Sigmoid colon (tissue), 7 donors: ENCODE measurements at regions of chr6 and their contacts with region 1.

Region 1: GRCh38 chr6:57252975-57253374 is 30.9 kb upstream of the RAB23 start:
- DNase-seq: no peak
- H3K4me3 ChIP-seq: peak overlapping the region in 1 of 4 donors; percentile 6
- H3K27ac ChIP-seq: peak overlapping the region; percentile 77 to 95 (median 90)
- H3K4me1 ChIP-seq: peaks cover 0 to 61% (median 53%) of the 10 kb centered on the region in 4 donors
- H3K27me3 ChIP-seq: no peaks in the 10 kb centered on the region
- CTCF ChIP-seq: no peak
- EP300 ChIP-seq: peak in 3 of 4 donors; percentile 27 to 79 (median 66)
- POLR2A ChIP-seq: no peak

Region 2: GRCh38 chr6:57177545-57178265 is 75.3 kb before region 1 on chr6:
- intact Hi-C with region 1: loop called (anchors 2 kb)
- DNase-seq: peak; percentile 93
- H3K4me3 ChIP-seq: peak overlapping the region; percentile 11 to 72 (median 28)
- H3K27ac ChIP-seq: peak overlapping the region; percentile 89 to 99 (median 92)
- H3K4me1 ChIP-seq: peaks cover 0 to 76% (median 71%) of the 10 kb centered on the region in 4 donors
- H3K27me3 ChIP-seq: no peaks in the 10 kb centered on the region
- CTCF ChIP-seq: no peak
- EP300 ChIP-seq: no peak
- POLR2A ChIP-seq: peak in 1 of 2 donors; percentile 35

Region 3: GRCh38 chr6:57221936-57222742 is 30.8 kb before region 1 on chr6 and contains the start of gene RAB23:
- intact Hi-C with region 1: loop called (anchors 2 kb)
- DNase-seq: peak; percentile 94
- H3K4me3 ChIP-seq: peak within 1 kb of the TSS; percentile 87 to 97 (median 90)
- H3K27ac ChIP-seq: peak within 1 kb of the TSS; percentile 94 to 100 (median 96)
- H3K4me1 ChIP-seq: peaks cover 0 to 74% (median 31%) of the 10 kb centered on the region in 4 donors
- H3K27me3 ChIP-seq: no peaks in the 10 kb centered on the region
- CTCF ChIP-seq: no peak
- EP300 ChIP-seq: no peak
- POLR2A ChIP-seq: peak; percentile 92 to 98
- total RNA-seq, gene RAB23: 115 to 188 (median 167) TPM